ENCODE measurements at regions of chr22 and their contacts with region 1.

Region 1: GRCh38 chr22:35840302-35840739 is 122.6 kb downstream of the APOL5 start:
- DNase-seq: peak; percentile 79 to 88
- ATAC-seq: peak; percentile 79 to 90 (median 86)
- H3K4me3 ChIP-seq: peak overlapping the region in 9 of 10 donors; percentile 28 to 59 (median 51)
- H3K27ac ChIP-seq: peak overlapping the region; percentile 35 to 88 (median 74)
- H3K4me1 ChIP-seq: peaks cover 10 to 82% (median 55%) of the 10 kb centered on the region in 9 donors
- H3K27me3 ChIP-seq: no peaks in the 10 kb centered on the region
- CTCF ChIP-seq: no peak

Region 2: GRCh38 chr22:35547993-35548721 is 292.2 kb before region 1 on chr22:
- intact Hi-C with region 1: no loop called
- DNase-seq: no peak
- ATAC-seq: no peak
- H3K4me3 ChIP-seq: no peak overlapping the region
- H3K27ac ChIP-seq: no peak overlapping the region
- H3K4me1 ChIP-seq: peaks cover 2 to 29% (median 22%) of the 10 kb centered on the region in 9 donors
- H3K27me3 ChIP-seq: peaks cover 0 to 13% (median 0%) of the 10 kb centered on the region in 7 donors
- CTCF ChIP-seq: no peak

Region 3: GRCh38 chr22:35627264-35628041 is 212.9 kb before region 1 on chr22:
- intact Hi-C with region 1: loop called in 3 of 10 experiments (anchors 5 to 10 kb)
- DNase-seq: peak; percentile 79 to 85
- ATAC-seq: peak; percentile 69 to 84 (median 78)
- H3K4me3 ChIP-seq: peak overlapping the region in 9 of 10 donors; percentile 28 to 71 (median 61)
- H3K27ac ChIP-seq: peak overlapping the region; percentile 11 to 93 (median 84)
- H3K4me1 ChIP-seq: peaks cover 3 to 37% (median 20%) of the 10 kb centered on the region in 9 donors
- H3K27me3 ChIP-seq: no peaks in the 10 kb centered on the region
- CTCF ChIP-seq: peak; percentile 17 to 75 (median 53)

Region 4: DNA sequence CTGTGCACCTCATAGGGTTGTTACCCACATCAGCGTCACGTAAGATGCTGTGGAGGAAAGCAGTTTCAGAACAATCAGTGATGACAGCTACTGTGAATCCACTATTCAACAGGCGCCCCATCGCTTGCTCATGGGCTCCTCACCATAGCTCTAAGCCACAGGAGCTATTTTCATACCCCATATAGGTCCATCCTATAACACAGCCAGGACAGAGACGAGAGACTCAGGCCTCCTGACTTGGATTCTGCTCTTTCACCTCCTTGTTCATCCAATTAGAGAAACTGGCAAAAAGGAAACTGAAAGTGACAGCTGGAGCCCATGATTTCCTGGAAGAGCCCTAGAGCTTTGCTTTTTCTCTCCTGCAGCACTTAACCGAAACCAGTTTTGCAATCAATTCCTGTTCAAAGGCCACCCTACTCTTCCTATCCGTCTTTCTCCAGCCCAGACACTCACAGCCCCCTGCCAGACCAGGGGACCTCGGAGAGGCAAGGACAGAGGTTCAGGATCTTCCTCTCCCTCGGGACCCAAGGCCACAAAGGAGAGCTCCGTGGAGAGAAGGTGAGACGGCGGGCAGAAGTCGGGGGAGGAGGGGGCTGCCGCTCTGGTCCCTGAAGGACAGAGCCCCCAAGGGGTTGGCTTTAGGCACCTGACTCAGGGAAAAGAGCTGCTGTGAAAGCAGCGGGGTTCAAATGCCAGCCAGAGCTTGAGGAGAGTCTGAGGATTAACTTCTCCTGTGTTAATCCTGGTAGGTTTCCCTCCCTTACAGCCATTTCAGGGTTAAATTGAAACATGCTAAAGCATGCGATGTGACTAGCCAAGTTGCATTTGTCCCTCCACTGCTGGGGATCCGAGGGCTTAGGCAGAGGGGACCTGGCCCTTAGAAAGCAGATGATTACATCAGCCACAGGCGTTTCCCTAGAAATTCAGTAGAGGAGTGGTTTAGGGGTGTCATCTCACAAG is 192.0 kb before region 1 on chr22 and contains the start of gene APOL6:
- intact Hi-C with region 1: loop called in 1 of 10 experiments (anchors 5 kb)
- DNase-seq: peak in 1 of 2 donors; percentile 62
- ATAC-seq: peak; percentile 53 to 85 (median 74)
- H3K4me3 ChIP-seq: peak within 1 kb of the TSS; percentile 54 to 80 (median 60)
- H3K27ac ChIP-seq: peak within 1 kb of the TSS; percentile 72 to 98 (median 92)
- H3K4me1 ChIP-seq: peaks cover 8 to 43% (median 30%) of the 10 kb centered on the region in 9 donors
- H3K27me3 ChIP-seq: no peaks in the 10 kb centered on the region
- CTCF ChIP-seq: no peak
- total RNA-seq, gene APOL6: 4.6 to 51.9 (median 8.7) TPM

Region 5: DNA sequence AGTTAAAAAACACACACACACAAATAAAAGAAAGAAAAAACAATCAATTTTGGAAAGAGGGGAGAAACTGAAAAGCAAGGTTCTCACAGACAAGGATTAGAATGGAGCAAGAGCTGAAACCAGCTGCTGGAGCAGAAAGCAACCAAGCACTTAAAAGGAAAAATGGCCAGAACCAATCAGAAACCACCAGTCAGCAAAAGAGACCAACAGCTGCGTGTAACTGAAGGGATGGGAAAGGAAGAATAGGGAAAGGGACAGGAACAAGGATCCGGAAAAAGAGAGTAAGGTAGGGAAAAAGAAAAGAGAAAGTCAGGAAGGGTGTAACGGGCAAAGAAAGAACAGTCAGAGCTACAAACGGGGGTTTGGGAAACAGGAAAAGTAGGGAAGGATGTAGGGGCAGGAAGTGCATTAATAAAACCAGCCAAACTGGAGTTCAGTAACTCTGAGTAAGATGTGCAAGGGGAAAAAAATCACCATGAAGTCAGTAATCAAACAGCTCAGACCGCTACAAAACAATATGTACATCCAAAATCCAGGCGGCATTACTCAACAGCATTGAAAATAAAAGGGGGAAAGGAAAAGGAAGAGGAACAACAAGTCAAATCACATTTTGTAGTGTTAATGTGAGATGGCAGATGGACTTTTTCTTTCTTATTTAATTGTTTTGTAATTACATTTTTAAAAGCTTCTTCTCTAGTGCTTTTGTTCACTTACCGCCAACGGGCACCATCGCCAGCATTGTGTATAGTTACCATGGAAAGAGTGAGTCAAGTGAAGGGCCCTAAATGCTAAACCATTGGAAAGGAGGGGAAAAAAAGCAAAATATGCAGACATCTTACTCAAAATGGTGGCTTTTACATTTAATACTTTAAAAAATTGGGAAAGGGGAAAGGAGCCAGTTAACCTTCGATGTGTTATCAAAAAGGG is 73.4 kb before region 1 on chr22:
- intact Hi-C with region 1: loop called in 1 of 10 experiments (anchors 5 kb)
- DNase-seq: no peak
- ATAC-seq: peak in 7 of 8 donors; percentile 50 to 75 (median 71)
- H3K4me3 ChIP-seq: peak overlapping the region in 1 of 10 donors; percentile 20
- H3K27ac ChIP-seq: peak overlapping the region in 7 of 10 donors; percentile 0 to 46 (median 18)
- H3K4me1 ChIP-seq: peaks cover 0 to 31% (median 8%) of the 10 kb centered on the region in 9 donors
- H3K27me3 ChIP-seq: no peaks in the 10 kb centered on the region
- CTCF ChIP-seq: no peak

Region 6: DNA sequence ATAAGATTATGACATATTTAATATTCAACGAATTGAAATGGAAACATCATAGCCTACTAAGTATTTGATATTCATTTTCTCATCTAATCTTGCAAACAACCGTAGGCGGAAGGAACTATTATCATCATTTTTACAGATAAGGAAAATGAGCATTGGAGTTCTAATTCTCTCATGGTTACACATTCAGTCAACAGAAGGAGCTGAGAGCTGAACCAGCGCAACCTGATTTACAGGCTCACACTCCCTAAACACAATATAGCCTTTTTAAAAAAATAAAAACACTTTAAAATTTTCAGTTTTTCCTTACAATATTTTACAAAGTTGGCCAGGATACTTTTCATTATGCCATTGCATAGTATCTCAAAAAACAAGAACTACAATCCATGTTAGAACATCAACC is 47.8 kb before region 1 on chr22:
- intact Hi-C with region 1: loop called in 2 of 10 experiments (anchors 5 to 10 kb)
- DNase-seq: no peak
- ATAC-seq: no peak
- H3K4me3 ChIP-seq: no peak overlapping the region
- H3K27ac ChIP-seq: no peak overlapping the region
- H3K4me1 ChIP-seq: peaks cover 0 to 17% (median 0%) of the 10 kb centered on the region in 9 donors
- H3K27me3 ChIP-seq: no peaks in the 10 kb centered on the region
- CTCF ChIP-seq: no peak